ENCODE measurements at regions of chr14 and their contacts with region 1.

Region 1: GRCh38 chr14:63833728-63834127 is 19.1 kb upstream of the SYNE2 start:
- DNase-seq: no peak
- ATAC-seq: no peak

Region 2: GRCh38 chr14:63896278-63896720 is 62.6 kb after region 1 on chr14:
- intact Hi-C with region 1: no loop called
- DNase-seq: peak; percentile 58 to 63
- ATAC-seq: peak; percentile 83

Region 3: GRCh38 chr14:63986789-63987533 is 153.2 kb after region 1 on chr14:
- intact Hi-C with region 1: loop called in 1 of 2 experiments (anchors 10 kb)
- DNase-seq: peak in 1 of 2 donors; percentile 30
- ATAC-seq: peak; percentile 90

Region 4: DNA sequence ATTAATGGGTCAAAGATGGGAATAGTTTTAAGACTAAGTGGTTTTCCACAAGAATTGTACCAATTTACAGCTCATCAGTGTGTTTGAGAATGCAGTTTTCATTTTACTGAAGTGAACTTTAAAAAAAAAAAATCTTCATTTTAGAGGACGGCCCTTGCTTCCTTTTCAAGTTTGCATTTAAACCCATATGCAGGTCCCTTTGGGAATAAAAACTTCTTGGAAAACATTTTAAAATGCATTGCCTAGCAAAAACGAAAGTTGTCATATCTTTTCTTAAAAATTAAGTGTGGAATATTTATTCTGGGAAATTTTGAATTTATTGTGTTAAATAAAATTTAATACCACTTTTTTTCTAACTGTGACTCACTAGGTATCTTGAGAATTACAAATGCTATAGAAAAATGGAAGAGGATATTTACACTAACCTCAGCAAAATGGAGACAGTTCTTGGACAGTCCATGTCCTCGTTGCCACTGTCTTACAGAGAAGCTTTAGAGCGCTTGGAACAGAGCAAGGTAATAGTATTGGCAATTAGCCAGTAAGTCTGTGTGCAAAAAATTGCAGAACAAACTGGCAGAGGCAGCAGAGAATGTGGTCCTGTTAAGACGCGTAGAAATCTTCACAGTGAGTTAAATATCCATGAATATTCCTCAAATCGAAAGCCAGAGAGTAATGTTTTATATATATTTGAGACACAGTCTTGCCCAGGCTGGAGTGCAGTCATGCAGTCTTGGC is 228.8 kb after region 1 on chr14:
- intact Hi-C with region 1: no loop called
- DNase-seq: no peak
- ATAC-seq: no peak

Measured in left colon (tissue), 2 donors.